Activated CD4-positive, alpha-beta T cell treated with anti-CD3 and anti-CD28 coated beads for 36 hours (primary cell): ENCODE measurements at regions of chr17 and their contacts with region 1.

Region 1: GRCh38 chr17:50783193-50783660 is 15.9 kb upstream of the ANKRD40CL start:
- DNase-seq: peak; percentile 90
- ATAC-seq: peak; percentile 89
- H3K4me3 Mint-ChIP-seq: no peak overlapping the region
- H3K27ac Mint-ChIP-seq: no peak overlapping the region
- H3K4me1 Mint-ChIP-seq: peaks cover 22% of the 10 kb centered on the region
- H3K27me3 Mint-ChIP-seq: peaks cover 11% of the 10 kb centered on the region

Region 2: DNA sequence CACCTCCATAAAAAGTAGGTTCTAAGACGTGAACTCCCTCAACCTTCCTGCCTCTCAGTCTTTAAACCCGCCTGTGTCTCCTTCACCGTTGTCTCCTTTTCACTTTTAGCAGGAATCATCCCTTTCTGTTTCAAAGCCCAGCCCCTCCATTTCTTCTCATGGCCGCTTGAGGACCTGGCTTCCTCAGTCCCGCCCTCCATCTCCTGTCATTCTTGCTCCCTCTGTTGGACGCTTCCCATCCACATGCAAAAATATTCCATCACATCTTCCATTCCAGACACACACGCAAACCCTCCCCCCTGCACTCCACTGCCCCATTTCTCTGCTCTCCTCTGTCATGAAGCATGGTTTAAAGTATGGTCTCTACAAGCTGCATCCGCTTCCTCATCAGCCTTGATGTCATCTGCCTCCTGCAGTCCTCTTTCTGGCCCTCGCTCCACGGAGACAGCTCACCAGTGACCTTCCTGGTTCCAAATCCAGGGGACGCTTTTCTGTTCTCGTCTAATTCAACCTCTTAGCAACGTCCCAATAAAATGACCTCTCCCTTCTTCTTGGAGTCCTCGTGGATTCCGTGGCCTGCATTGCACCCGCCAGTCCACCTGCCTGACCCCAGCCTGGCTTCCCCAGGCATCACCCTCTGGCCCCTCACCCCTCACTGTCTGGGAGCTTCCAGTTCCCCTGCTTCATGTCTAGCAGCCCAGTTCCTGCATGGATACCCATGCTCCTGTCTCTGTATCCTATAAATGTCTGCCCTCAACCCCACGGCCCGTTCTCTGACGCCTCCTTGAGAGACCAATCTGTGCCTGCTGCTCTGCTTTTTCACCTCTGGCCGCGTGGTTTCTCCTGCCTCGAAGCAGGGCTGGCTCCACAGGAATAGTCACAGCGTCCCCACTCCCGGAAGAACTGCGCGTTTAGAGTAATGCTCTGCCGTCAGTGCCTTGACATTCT is 101.7 kb before region 1 on chr17:
- CTCF ChIA-PET with region 1: no interaction called
- POLR2A ChIA-PET with region 1: no interaction called
- intact Hi-C with region 1: no loop called
- DNase-seq: no peak
- ATAC-seq: peak; percentile 36
- H3K4me3 Mint-ChIP-seq: no peak overlapping the region
- H3K27ac Mint-ChIP-seq: no peak overlapping the region
- H3K4me1 Mint-ChIP-seq: peaks cover 4% of the 10 kb centered on the region
- H3K27me3 Mint-ChIP-seq: peaks cover 9% of the 10 kb centered on the region

Region 3: GRCh38 chr17:50763716-50764475 is 19.3 kb before region 1 on chr17:
- CTCF ChIA-PET with region 1: interaction called, 14 read pairs
- POLR2A ChIA-PET with region 1: interaction called, 5 read pairs
- intact Hi-C with region 1: no loop called
- DNase-seq: no peak
- ATAC-seq: no peak
- H3K4me3 Mint-ChIP-seq: no peak overlapping the region
- H3K27ac Mint-ChIP-seq: no peak overlapping the region
- H3K4me1 Mint-ChIP-seq: peaks cover 12% of the 10 kb centered on the region
- H3K27me3 Mint-ChIP-seq: peaks cover 1% of the 10 kb centered on the region

Region 4: GRCh38 chr17:50798424-50799288 is 15.4 kb after region 1 on chr17:
- CTCF ChIA-PET with region 1: interaction called, 52 read pairs
- POLR2A ChIA-PET with region 1: interaction called, 3 read pairs
- intact Hi-C with region 1: no loop called
- DNase-seq: no peak
- ATAC-seq: no peak
- H3K4me3 Mint-ChIP-seq: no peak overlapping the region
- H3K27ac Mint-ChIP-seq: no peak overlapping the region
- H3K4me1 Mint-ChIP-seq: no peaks in the 10 kb centered on the region
- H3K27me3 Mint-ChIP-seq: no peaks in the 10 kb centered on the region

Region 5: GRCh38 chr17:50841949-50842354 is 58.7 kb after region 1 on chr17:
- CTCF ChIA-PET with region 1: interaction called, 32 read pairs
- POLR2A ChIA-PET with region 1: no interaction called
- intact Hi-C with region 1: loop called (anchors 1 kb)
- DNase-seq: peak; percentile 77
- ATAC-seq: peak; percentile 85
- H3K4me3 Mint-ChIP-seq: no peak overlapping the region
- H3K27ac Mint-ChIP-seq: no peak overlapping the region
- H3K4me1 Mint-ChIP-seq: no peaks in the 10 kb centered on the region
- H3K27me3 Mint-ChIP-seq: no peaks in the 10 kb centered on the region

Region 6: DNA sequence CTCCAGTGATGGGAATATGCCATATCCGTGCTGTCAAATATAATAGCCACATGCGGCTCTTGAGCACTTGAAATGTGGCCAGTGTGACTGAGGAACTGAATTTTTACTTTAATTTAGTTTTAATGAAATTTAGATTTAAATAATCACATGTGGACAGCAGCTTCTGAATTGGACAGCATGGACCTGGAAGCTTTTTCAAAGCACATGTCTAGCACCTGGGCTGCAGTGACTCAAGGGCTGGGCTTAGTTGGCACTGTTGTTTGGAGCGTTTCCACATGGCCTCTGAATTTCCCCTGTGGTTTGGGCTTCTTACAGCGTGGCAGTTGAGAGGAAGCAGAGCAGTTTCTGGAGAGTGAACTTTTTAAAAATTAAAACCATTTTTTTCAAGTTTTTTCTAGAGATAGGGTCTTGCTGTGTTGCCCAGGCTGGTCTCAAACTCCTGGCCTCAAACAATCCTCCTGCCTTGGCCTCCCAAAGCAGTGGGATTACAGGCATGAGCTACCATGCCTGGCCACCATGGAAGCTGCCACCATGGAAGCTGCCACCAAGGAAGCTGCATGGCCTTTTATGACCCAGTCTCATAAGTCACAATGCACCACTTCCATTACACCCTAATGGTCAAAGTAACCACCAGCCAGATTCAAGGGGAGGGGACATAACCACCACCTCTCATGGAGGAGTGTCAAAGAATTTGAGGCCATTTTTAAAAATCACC is 89.6 kb after region 1 on chr17:
- CTCF ChIA-PET with region 1: no interaction called
- POLR2A ChIA-PET with region 1: no interaction called
- intact Hi-C with region 1: no loop called
- DNase-seq: peak; percentile 74
- ATAC-seq: peak; percentile 80
- H3K4me3 Mint-ChIP-seq: no peak overlapping the region
- H3K27ac Mint-ChIP-seq: peak overlapping the region; percentile 25
- H3K4me1 Mint-ChIP-seq: peaks cover 40% of the 10 kb centered on the region
- H3K27me3 Mint-ChIP-seq: no peaks in the 10 kb centered on the region

Region 7: GRCh38 chr17:50956750-50957523 is 173.7 kb after region 1 on chr17:
- CTCF ChIA-PET with region 1: interaction called, 6 read pairs
- POLR2A ChIA-PET with region 1: no interaction called
- intact Hi-C with region 1: loop called (anchors 1 kb)
- DNase-seq: peak; percentile 80
- ATAC-seq: peak; percentile 98
- H3K4me3 Mint-ChIP-seq: no peak overlapping the region
- H3K27ac Mint-ChIP-seq: no peak overlapping the region
- H3K4me1 Mint-ChIP-seq: peaks cover 2% of the 10 kb centered on the region
- H3K27me3 Mint-ChIP-seq: no peaks in the 10 kb centered on the region

Region 8: GRCh38 chr17:51298508-51299371 is 515.5 kb after region 1 on chr17:
- CTCF ChIA-PET with region 1: no interaction called
- POLR2A ChIA-PET with region 1: no interaction called
- intact Hi-C with region 1: no loop called
- DNase-seq: no peak
- ATAC-seq: peak; percentile 39
- H3K4me3 Mint-ChIP-seq: no peak overlapping the region
- H3K27ac Mint-ChIP-seq: no peak overlapping the region
- H3K4me1 Mint-ChIP-seq: peaks cover 2% of the 10 kb centered on the region
- H3K27me3 Mint-ChIP-seq: no peaks in the 10 kb centered on the region